ENCODE measurements at regions of chr6 and their contacts with region 1.

Region 1: DNA sequence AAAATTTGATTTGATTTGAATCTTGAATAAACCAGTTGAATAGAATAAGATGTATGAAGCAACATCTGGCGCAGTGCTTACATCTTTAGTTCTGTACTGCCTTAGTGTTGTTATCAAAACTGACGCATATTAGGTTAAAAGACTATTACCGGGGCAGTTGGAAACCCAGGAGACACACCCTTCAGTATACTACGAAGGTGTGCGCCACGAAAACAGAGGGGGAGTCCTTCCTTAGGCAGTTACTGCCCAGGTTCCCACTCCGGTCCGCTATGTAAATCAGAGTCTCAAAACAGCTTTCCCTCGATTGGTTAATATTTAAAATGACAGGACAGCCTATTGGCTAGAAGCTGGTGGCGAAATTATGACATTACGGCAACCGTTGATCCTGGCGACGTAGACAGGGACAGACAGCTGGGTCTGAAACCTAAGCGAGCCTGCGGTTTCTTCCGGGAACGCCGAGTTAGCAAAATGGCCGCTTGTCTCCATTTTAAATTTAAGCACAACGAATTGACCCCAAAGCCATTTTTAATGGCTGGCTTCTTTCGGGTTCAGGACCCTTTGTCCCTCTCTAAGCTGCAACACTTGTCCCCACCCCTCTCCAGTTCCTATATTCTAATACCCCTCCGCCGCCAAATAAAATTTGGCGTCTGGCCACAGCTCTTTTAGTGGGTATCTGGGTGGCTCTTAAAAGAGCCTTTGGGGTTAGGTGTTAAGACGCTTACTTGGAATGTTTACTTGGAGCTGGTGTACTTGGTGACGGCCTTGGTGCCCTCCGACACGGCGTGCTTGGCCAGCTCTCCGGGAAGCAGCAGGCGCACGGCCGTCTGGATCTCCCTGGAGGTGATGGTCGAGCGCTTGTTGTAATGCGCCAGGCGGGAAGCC is 35.8 kb downstream of the HFE start:
- DNase-seq: peak; percentile 98
- ATAC-seq: peak; percentile 60
- H3K4me3 Mint-ChIP-seq: peak overlapping the region; percentile 84
- H3K27ac Mint-ChIP-seq: peak overlapping the region; percentile 98
- H3K4me1 Mint-ChIP-seq: peaks cover 27% of the 10 kb centered on the region
- H3K27me3 Mint-ChIP-seq: no peaks in the 10 kb centered on the region
- CTCF ChIP-seq: no peak

Region 2: DNA sequence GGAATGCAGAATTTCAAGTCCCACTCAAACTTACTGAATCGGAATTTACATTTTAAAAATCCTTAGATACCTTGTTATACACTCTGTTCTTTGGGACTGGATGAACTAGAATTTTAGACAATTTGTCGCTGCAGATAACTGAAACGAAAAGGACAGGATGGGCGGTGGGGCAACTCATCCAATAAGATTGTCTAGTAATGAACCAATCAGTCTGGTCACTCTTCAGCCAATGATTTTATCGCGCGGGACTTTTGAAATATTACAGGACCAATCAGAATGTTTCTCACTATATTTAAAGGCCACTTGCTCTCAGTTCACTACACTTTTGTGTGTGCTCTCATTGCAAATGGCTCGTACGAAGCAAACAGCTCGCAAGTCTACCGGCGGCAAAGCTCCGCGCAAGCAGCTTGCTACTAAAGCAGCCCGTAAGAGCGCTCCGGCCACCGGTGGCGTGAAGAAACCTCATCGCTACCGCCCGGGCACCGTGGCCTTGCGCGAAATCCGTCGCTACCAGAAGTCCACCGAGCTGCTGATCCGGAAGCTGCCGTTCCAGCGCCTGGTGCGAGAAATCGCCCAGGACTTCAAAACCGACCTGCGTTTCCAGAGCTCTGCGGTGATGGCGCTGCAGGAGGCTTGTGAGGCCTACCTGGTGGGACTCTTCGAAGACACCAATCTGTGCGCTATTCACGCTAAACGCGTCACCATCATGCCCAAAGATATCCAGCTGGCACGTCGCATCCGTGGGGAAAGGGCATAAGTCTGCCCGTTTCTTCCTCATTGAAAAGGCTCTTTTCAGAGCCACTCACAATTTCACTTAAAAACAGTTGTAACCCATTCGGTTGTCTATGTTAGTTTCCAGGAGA is 77.7 kb before region 1 on chr6:
- CTCF ChIA-PET with region 1: interaction called, 3 read pairs
- POLR2A ChIA-PET with region 1: interaction called, 99 read pairs
- intact Hi-C with region 1: no loop called
- DNase-seq: peak; percentile 85
- ATAC-seq: peak; percentile 63
- H3K4me3 Mint-ChIP-seq: peak overlapping the region; percentile 76
- H3K27ac Mint-ChIP-seq: peak overlapping the region; percentile 96
- H3K4me1 Mint-ChIP-seq: peaks cover 10% of the 10 kb centered on the region
- H3K27me3 Mint-ChIP-seq: no peaks in the 10 kb centered on the region
- CTCF ChIP-seq: no peak

Region 3: DNA sequence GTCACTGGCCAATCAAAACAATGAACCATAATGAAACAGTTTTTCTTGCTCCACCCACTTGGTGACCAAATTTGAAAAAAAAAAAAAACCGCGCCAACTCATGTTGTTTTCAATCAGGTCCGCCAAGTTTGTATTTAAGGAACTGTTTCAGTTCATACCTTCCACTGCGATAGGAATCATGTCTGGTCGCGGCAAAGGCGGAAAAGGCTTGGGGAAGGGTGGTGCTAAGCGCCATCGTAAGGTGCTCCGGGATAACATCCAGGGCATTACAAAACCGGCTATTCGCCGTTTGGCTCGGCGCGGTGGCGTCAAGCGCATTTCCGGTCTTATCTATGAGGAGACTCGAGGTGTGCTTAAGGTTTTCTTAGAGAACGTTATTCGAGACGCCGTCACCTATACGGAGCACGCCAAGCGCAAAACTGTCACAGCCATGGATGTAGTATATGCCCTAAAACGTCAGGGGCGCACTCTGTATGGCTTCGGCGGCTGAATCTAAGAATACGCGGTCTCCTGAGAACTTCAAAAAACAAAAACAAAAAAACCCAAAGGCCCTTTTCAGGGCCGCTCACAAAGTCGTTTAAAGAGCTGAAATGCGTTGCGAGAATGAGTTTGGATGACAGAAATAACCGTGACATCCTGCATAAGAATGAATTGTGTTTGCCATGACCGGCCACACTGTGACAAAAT is 19.1 kb before region 1 on chr6:
- CTCF ChIA-PET with region 1: interaction called, 5 read pairs
- POLR2A ChIA-PET with region 1: interaction called, 54 read pairs
- intact Hi-C with region 1: loop called (anchors 2 kb)
- DNase-seq: peak; percentile 90
- ATAC-seq: peak; percentile 87
- H3K4me3 Mint-ChIP-seq: peak overlapping the region; percentile 85
- H3K27ac Mint-ChIP-seq: peak overlapping the region; percentile 98
- H3K4me1 Mint-ChIP-seq: peaks cover 15% of the 10 kb centered on the region
- H3K27me3 Mint-ChIP-seq: peaks cover 2% of the 10 kb centered on the region
- CTCF ChIP-seq: peak; percentile 46

Region 4: GRCh38 chr6:26175428-26176181 is 52.6 kb after region 1 on chr6:
- CTCF ChIA-PET with region 1: no interaction called
- POLR2A ChIA-PET with region 1: interaction called, 78 read pairs
- intact Hi-C with region 1: no loop called
- DNase-seq: peak; percentile 72
- ATAC-seq: peak; percentile 17
- H3K4me3 Mint-ChIP-seq: peak overlapping the region; percentile 46
- H3K27ac Mint-ChIP-seq: peak overlapping the region; percentile 63
- H3K4me1 Mint-ChIP-seq: peaks cover 38% of the 10 kb centered on the region
- H3K27me3 Mint-ChIP-seq: no peaks in the 10 kb centered on the region
- CTCF ChIP-seq: peak; percentile 86

Region 5: DNA sequence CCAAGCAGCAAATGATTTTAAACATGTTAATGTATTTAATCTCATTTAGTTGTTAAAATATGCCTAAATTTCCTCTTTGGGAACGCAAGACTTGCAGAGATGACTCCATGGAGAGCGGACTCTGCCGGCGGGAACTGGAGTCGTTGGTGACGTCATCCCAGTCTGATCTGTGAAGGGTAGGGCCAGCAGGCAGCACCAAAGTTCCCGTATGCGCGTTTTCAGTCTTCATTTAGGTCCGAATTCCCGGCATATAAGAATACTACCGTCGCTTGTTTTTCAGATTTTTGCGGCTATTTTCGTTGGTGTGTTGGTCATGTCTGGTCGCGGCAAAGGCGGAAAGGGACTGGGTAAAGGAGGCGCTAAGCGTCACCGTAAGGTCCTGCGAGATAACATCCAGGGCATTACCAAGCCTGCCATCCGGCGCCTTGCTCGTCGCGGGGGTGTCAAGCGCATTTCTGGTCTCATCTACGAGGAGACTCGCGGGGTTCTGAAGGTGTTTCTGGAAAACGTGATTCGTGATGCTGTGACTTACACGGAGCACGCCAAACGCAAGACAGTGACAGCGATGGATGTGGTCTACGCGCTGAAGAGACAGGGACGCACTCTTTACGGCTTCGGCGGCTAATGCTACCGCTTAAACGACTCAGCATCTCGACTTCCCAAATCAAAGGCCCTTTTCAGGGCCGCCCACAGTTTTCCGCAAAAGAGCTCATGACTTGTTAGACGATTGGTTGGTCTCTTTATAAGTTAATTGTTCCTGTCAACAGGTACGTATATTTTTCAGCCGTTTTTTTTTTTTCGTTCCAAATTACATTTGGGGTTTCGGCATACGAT is 81.5 kb after region 1 on chr6:
- CTCF ChIA-PET with region 1: interaction called, 4 read pairs
- POLR2A ChIA-PET with region 1: interaction called, 259 read pairs
- intact Hi-C with region 1: loop called (anchors 10 kb)
- DNase-seq: peak; percentile 91
- ATAC-seq: peak; percentile 75
- H3K4me3 Mint-ChIP-seq: no peak overlapping the region
- H3K27ac Mint-ChIP-seq: no peak overlapping the region
- H3K4me1 Mint-ChIP-seq: peaks cover 17% of the 10 kb centered on the region
- H3K27me3 Mint-ChIP-seq: no peaks in the 10 kb centered on the region
- CTCF ChIP-seq: no peak

Region 6: DNA sequence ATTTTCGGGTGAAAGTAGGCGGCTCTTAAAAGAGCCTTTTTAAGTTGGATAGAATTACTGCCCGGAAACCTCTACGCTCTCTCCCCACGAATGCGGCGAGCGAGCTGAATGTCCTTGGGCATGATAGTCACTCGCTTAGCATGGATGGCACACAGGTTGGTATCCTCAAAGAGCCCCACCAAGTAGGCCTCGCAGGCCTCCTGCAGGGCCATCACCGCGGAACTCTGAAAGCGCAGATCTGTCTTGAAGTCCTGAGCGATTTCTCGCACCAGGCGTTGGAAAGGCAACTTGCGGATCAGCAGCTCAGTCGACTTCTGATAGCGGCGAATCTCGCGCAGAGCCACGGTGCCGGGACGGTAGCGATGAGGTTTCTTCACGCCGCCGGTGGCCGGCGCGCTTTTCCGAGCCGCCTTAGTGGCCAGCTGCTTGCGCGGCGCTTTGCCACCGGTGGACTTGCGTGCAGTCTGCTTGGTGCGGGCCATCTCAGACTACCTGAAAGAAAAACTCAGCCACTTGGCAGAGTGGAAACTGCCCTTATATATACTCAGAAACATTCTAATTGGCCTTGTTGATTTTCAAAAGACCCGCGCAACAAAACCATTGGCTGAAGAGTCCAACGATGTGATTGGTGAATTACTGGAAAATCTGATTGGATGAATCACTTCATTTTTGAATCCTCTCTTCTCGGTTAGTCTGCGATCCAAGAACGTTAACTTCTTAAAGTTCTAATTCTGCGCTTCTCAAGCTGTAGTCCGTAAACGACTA is 148.1 kb after region 1 on chr6:
- CTCF ChIA-PET with region 1: no interaction called
- POLR2A ChIA-PET with region 1: interaction called, 34 read pairs
- intact Hi-C with region 1: no loop called
- DNase-seq: peak; percentile 87
- ATAC-seq: peak; percentile 43
- H3K4me3 Mint-ChIP-seq: no peak overlapping the region
- H3K27ac Mint-ChIP-seq: no peak overlapping the region
- H3K4me1 Mint-ChIP-seq: peaks cover 18% of the 10 kb centered on the region
- H3K27me3 Mint-ChIP-seq: no peaks in the 10 kb centered on the region
- CTCF ChIP-seq: no peak

Region 7: GRCh38 chr6:26312501-26313390 is 189.7 kb after region 1 on chr6:
- CTCF ChIA-PET with region 1: no interaction called
- POLR2A ChIA-PET with region 1: no interaction called
- intact Hi-C with region 1: no loop called
- DNase-seq: peak; percentile 92
- ATAC-seq: peak; percentile 74
- H3K4me3 Mint-ChIP-seq: peak overlapping the region; percentile 84
- H3K27ac Mint-ChIP-seq: peak overlapping the region; percentile 93
- H3K4me1 Mint-ChIP-seq: peaks cover 33% of the 10 kb centered on the region
- H3K27me3 Mint-ChIP-seq: no peaks in the 10 kb centered on the region
- CTCF ChIP-seq: no peak